Activated T-helper 1 cell treated with anti-CD3 and anti-CD28 coated beads, Interleukin-12 subunit alpha, Interleukin-12 subunit beta, Interleukin-2, Interleukin-4 antibody, amounts not matched to agents 30 ng/mL and 10 ng/mL and 1 ng/mL, durations not matched to agents 14 hours and 24 hours and 36 hours (primary cell): ENCODE measurements at regions of chr16 and their contacts with region 1.

Region 1: GRCh38 chr16:67191995-67192681 is at the start of gene E2F4:
- DNase-seq: peak; percentile 86
- H3K4me3 Mint-ChIP-seq: peak within 1 kb of the TSS; percentile 95
- H3K27ac Mint-ChIP-seq: peak within 1 kb of the TSS; percentile 86
- H3K4me1 Mint-ChIP-seq: peaks cover 51% of the 10 kb centered on the region
- H3K27me3 Mint-ChIP-seq: no peaks in the 10 kb centered on the region
- total RNA-seq, gene E2F4: 174 and 181 TPM in 2 replicates

Region 2: DNA sequence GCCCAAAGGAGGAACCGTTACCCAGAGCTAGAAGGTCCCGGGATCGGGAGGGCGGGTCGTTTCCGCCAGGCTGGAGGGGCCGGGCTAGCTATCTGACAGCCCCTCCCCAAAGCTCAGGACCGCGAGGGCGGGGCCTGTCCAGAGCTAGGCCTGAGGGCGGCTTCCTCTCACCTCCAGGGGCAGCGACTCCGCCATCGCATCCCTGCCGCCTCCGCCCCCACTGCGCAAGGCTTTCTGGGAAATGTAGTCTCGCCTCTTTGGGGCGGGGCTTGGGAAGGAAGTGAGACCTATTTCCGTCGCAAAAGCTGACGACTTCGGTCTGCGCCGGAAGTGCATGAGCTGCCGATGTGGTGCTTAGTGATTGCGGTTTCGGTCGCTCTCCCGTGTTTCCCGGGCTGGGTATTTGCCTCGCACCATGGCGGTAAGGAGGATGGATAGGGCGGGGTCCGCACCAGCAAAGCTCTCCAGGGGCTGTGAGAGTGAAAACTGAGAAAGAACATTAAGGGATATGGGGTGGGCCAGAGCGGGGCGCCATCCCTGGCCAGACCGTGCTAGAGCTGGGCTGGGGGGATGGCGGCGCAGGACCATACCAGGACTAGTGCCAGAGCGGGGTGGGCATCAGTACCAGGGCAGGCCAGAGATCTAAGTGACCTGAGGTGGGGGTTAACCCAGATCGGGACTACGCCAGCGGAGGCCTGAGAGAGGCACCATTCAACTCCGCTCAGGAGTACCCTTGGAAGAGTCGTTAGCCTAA is 34.8 kb after region 1 on chr16 and contains the start of gene TMEM208:
- intact Hi-C with region 1: loop called (anchors 1 kb)
- DNase-seq: peak; percentile 99
- H3K4me3 Mint-ChIP-seq: peak within 1 kb of the TSS; percentile 98
- H3K27ac Mint-ChIP-seq: peak within 1 kb of the TSS; percentile 94
- H3K4me1 Mint-ChIP-seq: peaks cover 43% of the 10 kb centered on the region
- H3K27me3 Mint-ChIP-seq: no peaks in the 10 kb centered on the region
- total RNA-seq, gene TMEM208: 68.5 and 72.4 TPM in 2 replicates

Region 3: DNA sequence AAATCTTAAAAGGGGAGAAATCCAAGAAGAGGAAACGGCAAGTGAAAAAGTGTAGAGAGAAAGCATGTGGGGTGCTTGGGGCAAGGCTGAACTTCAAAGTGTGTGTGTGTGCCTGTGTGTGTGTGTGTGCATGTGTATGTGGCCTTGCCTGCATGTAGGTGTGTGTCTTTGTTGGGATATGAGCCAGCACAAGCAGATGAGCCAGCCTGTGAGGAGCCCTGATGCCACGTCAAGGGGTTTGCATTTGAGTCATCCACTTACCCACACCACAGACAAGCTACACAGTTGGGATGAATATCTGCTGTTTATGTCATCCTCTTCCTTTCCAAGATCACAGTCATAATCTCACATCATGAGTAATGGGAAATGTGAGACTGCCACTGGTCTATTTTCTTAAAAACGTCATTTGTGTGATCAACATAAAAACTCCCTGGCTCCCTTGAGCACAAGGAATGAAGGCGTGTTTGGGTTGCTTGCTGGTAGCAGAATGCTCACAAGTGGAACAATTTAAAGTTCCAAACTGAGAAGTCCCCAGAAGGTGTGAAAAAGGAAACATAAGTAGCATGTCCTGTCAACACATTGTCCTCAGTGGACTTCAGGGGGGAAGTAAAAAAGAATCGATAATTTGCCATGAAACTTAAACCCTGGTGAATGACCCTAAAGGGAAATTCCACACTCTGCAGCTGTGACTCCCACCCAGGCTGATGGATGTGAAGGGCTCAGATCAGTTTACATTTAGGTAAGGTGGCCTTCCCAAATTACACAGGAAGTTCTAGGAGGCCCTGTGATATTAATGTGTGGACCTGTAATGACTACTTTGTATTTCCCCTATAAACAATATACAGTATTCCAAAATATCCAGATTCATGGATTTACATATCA is 119.7 kb after region 1 on chr16:
- intact Hi-C with region 1: loop called (anchors 5 kb)
- DNase-seq: peak; percentile 78
- H3K4me3 Mint-ChIP-seq: peak overlapping the region; percentile 19
- H3K27ac Mint-ChIP-seq: peak overlapping the region; percentile 98
- H3K4me1 Mint-ChIP-seq: peaks cover 45% of the 10 kb centered on the region
- H3K27me3 Mint-ChIP-seq: no peaks in the 10 kb centered on the region